Breast epithelium (tissue), 4 donors: ENCODE measurements at regions of chr2 and their contacts with region 1.

Region 1: DNA sequence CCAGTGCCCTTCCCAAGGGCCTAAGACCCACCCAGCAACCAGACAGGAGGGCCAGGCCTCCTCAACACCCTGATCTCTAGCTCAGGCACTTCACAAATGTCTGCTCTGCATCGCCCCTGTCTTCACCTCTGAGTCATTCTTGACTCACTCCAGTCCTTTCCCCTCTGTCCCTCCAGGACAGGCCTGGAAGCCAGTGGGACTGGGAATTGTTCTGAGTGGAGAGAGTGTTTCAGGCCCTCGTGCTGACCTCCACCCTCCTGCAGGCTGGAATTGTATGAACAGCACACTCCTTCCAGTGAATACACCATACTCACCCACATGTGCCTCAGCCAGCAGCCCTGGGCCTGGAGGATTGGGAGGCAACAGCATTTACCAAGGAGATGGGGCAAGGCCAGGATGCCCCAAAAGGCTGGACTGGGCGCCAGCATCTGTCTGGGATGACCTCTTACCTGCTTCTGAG is 304.2 kb downstream of the CYP26B1 start:
- DNase-seq: no peak
- H3K4me3 ChIP-seq: no peak overlapping the region
- H3K27ac ChIP-seq: no peak overlapping the region
- H3K4me1 ChIP-seq: no peaks in the 10 kb centered on the region
- H3K27me3 ChIP-seq: no peaks in the 10 kb centered on the region
- CTCF ChIP-seq: no peak
- POLR2A ChIP-seq: no peak

Region 2: GRCh38 chr2:71113843-71114242 is 729.6 kb before region 1 on chr2:
- intact Hi-C with region 1: loop called (anchors 5 kb)
- DNase-seq: no peak
- H3K4me3 ChIP-seq: no peak overlapping the region
- H3K27ac ChIP-seq: no peak overlapping the region
- H3K4me1 ChIP-seq: no peaks in the 10 kb centered on the region
- H3K27me3 ChIP-seq: no peaks in the 10 kb centered on the region
- CTCF ChIP-seq: no peak
- POLR2A ChIP-seq: no peak